ENCODE measurements at regions of chr16 and their contacts with region 1.

Region 1: DNA sequence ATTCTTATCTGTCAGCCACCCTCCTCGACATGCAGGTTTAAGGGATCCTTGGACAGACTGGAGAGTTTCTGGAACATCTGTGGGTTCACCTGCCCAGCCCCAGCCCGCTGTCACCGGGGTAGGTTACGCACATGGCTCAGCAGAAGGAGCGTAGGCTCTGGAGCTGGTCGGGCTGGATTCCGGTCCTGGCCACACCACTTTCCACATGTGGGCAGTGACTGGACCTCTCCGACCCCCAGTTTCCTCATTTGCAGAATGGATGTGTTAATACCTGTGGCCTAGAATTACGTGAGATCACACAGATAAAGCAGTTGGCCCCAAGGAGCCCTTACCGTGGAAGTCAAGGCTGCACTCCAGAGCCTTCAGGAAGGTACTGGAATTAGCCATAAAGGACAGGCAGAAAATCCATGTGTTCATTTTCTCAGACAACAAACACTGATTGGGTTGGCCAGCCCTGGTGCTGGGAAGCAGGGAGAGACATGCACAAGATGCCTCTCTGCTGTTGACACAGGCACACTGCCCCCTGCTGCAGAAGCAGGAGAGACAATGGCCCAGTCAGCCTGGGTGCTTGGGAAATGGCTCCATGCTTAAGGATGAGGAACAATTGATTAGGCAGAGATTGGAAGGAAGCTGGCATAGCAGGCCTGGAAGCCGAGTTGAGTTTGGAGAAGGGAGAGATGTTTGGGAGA is 58.8 kb downstream of the SF3B3 start:
- DNase-seq: no peak
- H3K4me3 ChIP-seq: no peak overlapping the region
- H3K27ac ChIP-seq: no peak overlapping the region
- H3K4me1 ChIP-seq: peaks cover 0 to 12% of the 10 kb centered on the region in 2 donors
- H3K27me3 ChIP-seq: no peaks in the 10 kb centered on the region
- CTCF ChIP-seq: no peak
- POLR2A ChIP-seq: no peak

Region 2: DNA sequence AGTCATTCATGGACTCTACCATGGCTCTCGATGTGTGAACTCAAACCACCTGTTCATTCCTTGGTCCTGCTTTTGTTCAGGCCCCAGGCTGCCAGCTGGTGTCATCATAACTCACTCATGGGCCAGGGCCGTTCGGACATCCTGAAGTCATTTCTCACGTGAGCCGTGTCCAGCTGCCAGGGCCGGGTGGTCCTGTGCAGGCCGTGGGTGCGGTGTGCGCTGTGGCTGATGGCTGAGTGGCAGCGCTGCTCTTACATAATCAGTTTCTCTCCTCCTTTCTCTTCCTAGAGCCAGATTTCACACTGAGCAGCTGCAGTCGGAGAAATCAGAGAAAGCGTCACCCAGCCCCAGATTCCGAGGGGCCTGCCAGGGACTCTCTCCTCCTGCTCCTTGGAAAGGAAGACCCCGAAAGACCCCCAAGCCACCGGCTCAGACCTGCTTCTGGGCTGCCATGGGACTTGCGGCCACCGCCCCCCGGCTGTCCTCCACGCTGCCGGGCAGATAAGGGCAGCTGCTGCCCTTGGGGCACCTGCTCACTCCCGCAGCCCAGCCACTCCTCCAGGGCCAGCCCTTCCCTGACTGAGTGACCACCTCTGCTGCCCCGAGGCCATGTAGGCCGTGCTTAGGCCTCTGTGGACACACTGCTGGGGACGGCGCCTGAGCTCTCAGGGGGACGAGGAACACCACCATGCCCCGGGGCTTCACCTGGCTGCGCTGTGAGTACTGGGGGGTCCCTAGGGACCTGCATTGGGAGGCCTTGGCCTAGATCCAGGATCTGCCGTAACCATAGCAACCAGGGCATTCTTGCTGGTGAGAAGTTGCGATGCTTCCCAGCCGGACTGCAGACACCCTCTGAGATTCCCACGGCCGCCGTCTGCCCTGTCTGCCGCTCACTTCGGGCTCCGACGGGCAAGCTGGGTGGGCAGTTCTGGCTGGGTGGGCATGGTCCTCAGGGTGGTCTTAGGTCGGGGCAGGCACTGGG is 64.1 kb after region 1 on chr16 and contains the start of gene IL34:
- intact Hi-C with region 1: loop called (anchors 5 kb)
- DNase-seq: no peak
- H3K4me3 ChIP-seq: no peak within 1 kb of the TSS
- H3K27ac ChIP-seq: peak within 1 kb of the TSS in 1 of 3 donors; percentile 12
- H3K4me1 ChIP-seq: no peaks in the 10 kb centered on the region
- H3K27me3 ChIP-seq: no peaks in the 10 kb centered on the region
- CTCF ChIP-seq: no peak
- POLR2A ChIP-seq: no peak
- total RNA-seq, gene IL34: 3.5 to 9.6 (median 5.0) TPM